Endothelial cell of umbilical vein (primary cell): ENCODE measurements at regions of chr22 and their contacts with region 1.

Region 1: DNA sequence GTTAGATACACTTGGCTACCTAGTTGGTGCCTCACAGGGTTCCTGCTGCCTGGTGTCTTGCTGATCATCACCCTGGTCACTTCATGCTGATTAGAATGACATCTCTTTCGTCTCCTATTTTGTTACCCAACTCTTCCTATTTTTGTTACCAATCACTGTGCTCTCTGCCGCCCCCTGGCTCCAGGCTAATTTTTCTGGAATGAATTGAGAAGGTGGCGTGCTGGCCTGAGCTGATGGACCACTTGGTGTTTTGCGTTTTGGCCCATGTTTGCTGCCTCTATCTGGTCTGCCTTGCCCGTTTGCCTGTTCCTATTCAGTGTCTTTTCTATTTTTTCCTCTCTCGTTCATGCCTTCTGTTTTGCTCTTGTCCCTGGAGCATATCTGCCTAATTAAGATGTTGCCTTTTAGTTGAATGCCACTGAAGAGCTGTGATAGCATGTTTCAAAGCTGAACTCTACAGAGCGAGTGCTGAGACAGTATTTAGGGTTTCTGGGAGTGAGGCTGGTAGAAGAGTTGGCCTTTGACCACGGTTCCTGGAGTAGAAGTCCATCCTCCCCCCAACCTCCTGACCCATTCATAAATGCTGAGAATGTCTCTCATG is 5.9 kb upstream of the ATF4 start:
- DNase-seq: peak; percentile 41
- H3K4me3 ChIP-seq: no peak overlapping the region
- H3K27ac ChIP-seq: no peak overlapping the region
- H3K4me1 ChIP-seq: peaks cover 8% of the 10 kb centered on the region
- H3K27me3 ChIP-seq: no peaks in the 10 kb centered on the region
- CTCF ChIP-seq: peak; percentile 75 to 83
- POLR2A ChIP-seq: no peak

Region 2: GRCh38 chr22:39477542-39477941 is 36.9 kb before region 1 on chr22:
- CTCF ChIA-PET with region 1: no interaction called
- POLR2A ChIA-PET with region 1: no interaction called
- dilution Hi-C with region 1: no loop called
- intact Hi-C with region 1: no loop called
- DNase-seq: no peak
- H3K4me3 ChIP-seq: no peak overlapping the region
- H3K27ac ChIP-seq: no peak overlapping the region
- H3K4me1 ChIP-seq: no peaks in the 10 kb centered on the region
- H3K27me3 ChIP-seq: no peaks in the 10 kb centered on the region
- CTCF ChIP-seq: no peak
- POLR2A ChIP-seq: no peak

Region 3: GRCh38 chr22:39496131-39496838 is 18.2 kb before region 1 on chr22:
- CTCF ChIA-PET with region 1: interaction called, 49 read pairs
- POLR2A ChIA-PET with region 1: interaction called, 5 read pairs
- dilution Hi-C with region 1: no loop called
- intact Hi-C with region 1: loop called (anchors 1 kb)
- DNase-seq: peak; percentile 60
- H3K4me3 ChIP-seq: no peak overlapping the region
- H3K27ac ChIP-seq: no peak overlapping the region
- H3K4me1 ChIP-seq: no peaks in the 10 kb centered on the region
- H3K27me3 ChIP-seq: peaks cover 0 to 3% of the 10 kb centered on the region in 2 experiments
- CTCF ChIP-seq: peak; percentile 84 to 85
- POLR2A ChIP-seq: no peak

Region 4: DNA sequence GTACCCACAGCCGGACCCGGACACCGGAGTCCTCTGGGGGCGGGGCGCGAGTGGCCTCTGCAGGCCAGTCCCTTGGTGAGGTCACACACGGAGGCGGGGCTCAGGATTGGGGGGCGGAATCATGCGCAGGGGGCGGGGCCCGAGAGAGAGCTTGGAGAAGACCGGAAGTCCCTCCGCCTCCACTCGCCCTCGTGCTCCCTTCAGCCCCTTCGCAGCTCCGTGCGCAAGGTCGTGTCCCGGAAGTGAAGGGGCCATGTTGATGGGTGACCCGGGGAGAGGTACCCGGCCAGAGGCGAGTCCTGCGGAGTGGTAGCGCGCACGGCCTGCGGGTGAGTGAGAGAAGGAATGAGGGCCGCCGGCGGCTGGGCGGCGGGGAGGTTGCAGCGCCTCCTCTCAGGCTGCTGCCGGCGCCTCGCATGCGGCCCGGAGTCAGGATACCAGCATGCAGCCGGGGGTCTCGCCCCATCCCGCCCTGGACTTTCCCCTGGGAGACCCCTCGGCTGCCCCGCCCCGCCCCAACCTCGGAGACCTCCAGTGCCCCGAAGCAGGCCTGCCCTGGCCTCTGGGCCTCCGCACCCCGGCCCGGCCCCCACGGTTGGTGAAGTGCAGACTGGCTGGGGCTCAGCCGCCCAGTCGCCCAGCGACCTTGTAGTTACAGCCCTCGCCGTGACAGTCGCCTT is 12.2 kb before region 1 on chr22 and contains the start of gene MIEF1:
- CTCF ChIA-PET with region 1: interaction called, 36 read pairs
- POLR2A ChIA-PET with region 1: interaction called, 12 read pairs
- dilution Hi-C with region 1: no loop called
- intact Hi-C with region 1: no loop called
- DNase-seq: peak; percentile 96
- H3K4me3 ChIP-seq: peak within 1 kb of the TSS; percentile 51 to 76 (median 67)
- H3K27ac ChIP-seq: peak within 1 kb of the TSS; percentile 5
- H3K4me1 ChIP-seq: peaks cover 12% of the 10 kb centered on the region
- H3K27me3 ChIP-seq: peaks cover 0 to 3% of the 10 kb centered on the region in 2 experiments
- CTCF ChIP-seq: no peak
- POLR2A ChIP-seq: peak; percentile 79
- total RNA-seq, gene MIEF1: 24.7 and 31.1 TPM in 2 replicates

Region 5: DNA sequence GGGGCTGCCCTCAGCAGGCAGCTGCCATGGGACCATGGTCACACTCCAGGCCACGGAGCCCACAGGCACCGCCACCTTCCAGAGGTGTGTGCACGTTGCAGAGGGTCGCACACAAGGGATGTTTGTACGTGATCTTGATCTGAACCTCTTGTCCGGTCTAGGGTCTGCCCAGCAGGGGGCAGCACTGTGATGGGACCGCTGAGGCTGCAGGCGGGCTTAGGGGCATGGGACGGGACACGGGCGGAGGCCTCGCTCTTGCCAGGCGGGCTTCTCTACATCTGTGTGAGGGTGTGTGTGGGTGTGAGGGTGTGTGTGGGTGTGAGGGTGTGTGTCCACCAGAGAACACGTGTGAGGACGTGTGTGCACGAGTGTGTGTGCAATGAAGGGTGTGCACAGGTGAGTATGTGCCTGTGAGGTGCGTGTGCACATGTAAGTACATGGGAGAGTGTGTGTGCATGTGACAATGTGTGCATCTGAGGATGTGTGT is 108.5 kb after region 1 on chr22:
- CTCF ChIA-PET with region 1: no interaction called
- POLR2A ChIA-PET with region 1: no interaction called
- dilution Hi-C with region 1: no loop called
- intact Hi-C with region 1: no loop called
- DNase-seq: peak; percentile 28
- H3K4me3 ChIP-seq: no peak overlapping the region
- H3K27ac ChIP-seq: no peak overlapping the region
- H3K4me1 ChIP-seq: no peaks in the 10 kb centered on the region
- H3K27me3 ChIP-seq: peaks cover 0 to 7% of the 10 kb centered on the region in 2 experiments
- CTCF ChIP-seq: peak; percentile 51 to 66
- POLR2A ChIP-seq: no peak

Region 6: GRCh38 chr22:39773976-39774539 is 259.6 kb after region 1 on chr22:
- CTCF ChIA-PET with region 1: no interaction called
- POLR2A ChIA-PET with region 1: no interaction called
- dilution Hi-C with region 1: no loop called
- intact Hi-C with region 1: no loop called
- DNase-seq: peak; percentile 17
- H3K4me3 ChIP-seq: no peak overlapping the region
- H3K27ac ChIP-seq: no peak overlapping the region
- H3K4me1 ChIP-seq: no peaks in the 10 kb centered on the region
- H3K27me3 ChIP-seq: peaks cover 16 to 45% of the 10 kb centered on the region in 2 experiments
- CTCF ChIP-seq: no peak
- POLR2A ChIP-seq: no peak